ENCODE measurements at regions of chr1 and their contacts with region 1.

Region 1: DNA sequence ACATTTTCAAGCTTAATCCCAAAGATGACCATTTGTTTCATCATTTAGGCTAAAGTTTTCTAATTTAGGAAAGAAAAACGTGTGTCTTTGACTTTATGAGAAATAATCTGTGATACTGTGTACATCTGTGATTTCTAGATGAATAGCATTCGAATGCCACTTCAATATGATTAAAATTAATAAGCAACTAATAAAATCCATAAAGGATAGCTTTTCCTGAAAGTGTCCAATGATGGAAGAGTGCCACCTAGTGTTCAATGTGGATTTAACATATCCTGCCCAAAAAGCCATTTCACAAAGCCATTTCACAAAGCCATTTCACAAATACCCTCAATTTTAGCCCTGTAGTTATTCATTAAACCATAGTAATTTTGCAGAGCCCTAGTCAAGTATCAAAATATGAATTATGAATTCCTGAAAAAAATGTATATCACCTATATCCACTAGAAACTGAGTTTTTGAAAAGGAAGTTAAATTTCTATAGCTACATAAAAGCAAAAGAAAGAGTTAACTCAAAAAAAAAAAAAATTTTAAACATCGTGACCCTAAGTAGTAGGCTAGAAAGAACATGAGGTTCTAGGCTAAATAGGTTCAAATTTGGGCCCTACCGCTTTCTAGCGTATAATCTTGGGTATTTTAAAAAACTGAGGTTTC is 19.1 kb downstream of the NME7 start:
- DNase-seq: peak in 8 of 35 experiments; percentile 5 to 81 (median 14)
- ATAC-seq: peak in 1 of 4 experiments; percentile 36
- H3K4me3 ChIP-seq: no peak overlapping the region
- H3K4me3 Mint-ChIP-seq: no peak overlapping the region
- H3K27ac ChIP-seq: no peak overlapping the region
- H3K27ac Mint-ChIP-seq: no peak overlapping the region
- H3K4me1 ChIP-seq: no peaks in the 10 kb centered on the region
- H3K4me1 Mint-ChIP-seq: peaks cover 0 to 11% (median 9%) of the 10 kb centered on the region in 3 donors
- H3K27me3 ChIP-seq: no peaks in the 10 kb centered on the region
- H3K27me3 Mint-ChIP-seq: no peaks in the 10 kb centered on the region

Region 2: GRCh38 chr1:168234846-168235547 is 1113.5 kb before region 1 on chr1:
- CTCF ChIA-PET with region 1: interaction called, 4 to 21 read pairs
- POLR2A ChIA-PET with region 1: no interaction called
- DNase-seq: peak in 27 of 35 experiments; percentile 3 to 65 (median 23)
- ATAC-seq: peak; percentile 85 to 93 (median 86)
- H3K4me3 ChIP-seq: no peak overlapping the region
- H3K4me3 Mint-ChIP-seq: no peak overlapping the region
- H3K27ac ChIP-seq: no peak overlapping the region
- H3K27ac Mint-ChIP-seq: no peak overlapping the region
- H3K4me1 ChIP-seq: peaks cover 0 to 8% of the 10 kb centered on the region in 2 experiments
- H3K4me1 Mint-ChIP-seq: peaks cover 61 to 65% (median 62%) of the 10 kb centered on the region in 3 donors
- H3K27me3 ChIP-seq: no peaks in the 10 kb centered on the region
- H3K27me3 Mint-ChIP-seq: no peaks in the 10 kb centered on the region

Region 3: GRCh38 chr1:168439456-168440375 is 908.8 kb before region 1 on chr1:
- CTCF ChIA-PET with region 1: interaction called, 5 to 29 read pairs
- POLR2A ChIA-PET with region 1: interaction called in 1 of 2 experiments, 3 read pairs
- DNase-seq: peak; percentile 63 to 92 (median 78)
- ATAC-seq: peak; percentile 85 to 88 (median 86)
- H3K4me3 ChIP-seq: peak overlapping the region in 1 of 2 donors; percentile 12
- H3K4me3 Mint-ChIP-seq: peak overlapping the region; percentile 62 to 73 (median 71)
- H3K27ac ChIP-seq: peak overlapping the region; percentile 22
- H3K27ac Mint-ChIP-seq: peak overlapping the region; percentile 83 to 89
- H3K4me1 ChIP-seq: peaks cover 11 to 31% of the 10 kb centered on the region in 2 experiments
- H3K4me1 Mint-ChIP-seq: peaks cover 53 to 60% (median 59%) of the 10 kb centered on the region in 3 donors
- H3K27me3 ChIP-seq: no peaks in the 10 kb centered on the region
- H3K27me3 Mint-ChIP-seq: peaks cover 0 to 3% of the 10 kb centered on the region in 2 donors

Region 4: GRCh38 chr1:168453056-168453455 is 895.5 kb before region 1 on chr1:
- CTCF ChIA-PET with region 1: interaction called in 1 of 2 experiments, 12 read pairs
- POLR2A ChIA-PET with region 1: no interaction called
- DNase-seq: no peak
- ATAC-seq: no peak
- H3K4me3 ChIP-seq: no peak overlapping the region
- H3K4me3 Mint-ChIP-seq: no peak overlapping the region
- H3K27ac ChIP-seq: no peak overlapping the region
- H3K27ac Mint-ChIP-seq: no peak overlapping the region
- H3K4me1 ChIP-seq: no peaks in the 10 kb centered on the region
- H3K4me1 Mint-ChIP-seq: peaks cover 21 to 30% (median 23%) of the 10 kb centered on the region in 3 donors
- H3K27me3 ChIP-seq: no peaks in the 10 kb centered on the region
- H3K27me3 Mint-ChIP-seq: no peaks in the 10 kb centered on the region

Region 5: GRCh38 chr1:168603501-168604110 is 744.9 kb before region 1 on chr1:
- CTCF ChIA-PET with region 1: interaction called, 28 to 88 read pairs
- POLR2A ChIA-PET with region 1: no interaction called
- DNase-seq: peak; percentile 27 to 79 (median 62)
- ATAC-seq: peak; percentile 66 to 87 (median 77)
- H3K4me3 ChIP-seq: no peak overlapping the region
- H3K4me3 Mint-ChIP-seq: no peak overlapping the region
- H3K27ac ChIP-seq: no peak overlapping the region
- H3K27ac Mint-ChIP-seq: no peak overlapping the region
- H3K4me1 ChIP-seq: no peaks in the 10 kb centered on the region
- H3K4me1 Mint-ChIP-seq: no peaks in the 10 kb centered on the region
- H3K27me3 ChIP-seq: no peaks in the 10 kb centered on the region
- H3K27me3 Mint-ChIP-seq: peaks cover 1 to 4% of the 10 kb centered on the region in 2 donors

Region 6: DNA sequence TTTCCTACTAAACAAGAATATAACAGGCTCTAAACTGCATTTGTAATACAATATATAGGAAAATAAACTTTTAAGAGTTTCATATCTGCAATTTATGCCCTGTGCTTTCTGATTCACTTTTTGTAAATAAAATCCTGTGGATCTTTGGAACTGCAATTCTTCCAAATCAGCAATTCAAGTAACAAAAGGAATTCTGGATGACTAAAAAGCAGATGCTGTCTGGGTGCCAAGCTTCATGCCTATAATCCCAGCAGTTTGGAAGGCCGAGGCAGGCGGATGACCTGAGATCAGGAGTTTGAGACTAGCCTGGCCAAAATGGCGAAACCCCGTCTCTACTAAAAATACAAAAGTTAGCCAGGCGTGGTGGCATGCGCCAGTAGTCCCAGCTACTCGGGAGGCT is 12.8 kb after region 1 on chr1:
- CTCF ChIA-PET with region 1: interaction called, 3 to 22 read pairs
- POLR2A ChIA-PET with region 1: interaction called in 1 of 2 experiments, 6 read pairs
- DNase-seq: no peak
- ATAC-seq: no peak
- H3K4me3 ChIP-seq: no peak overlapping the region
- H3K4me3 Mint-ChIP-seq: no peak overlapping the region
- H3K27ac ChIP-seq: no peak overlapping the region
- H3K27ac Mint-ChIP-seq: no peak overlapping the region
- H3K4me1 ChIP-seq: no peaks in the 10 kb centered on the region
- H3K4me1 Mint-ChIP-seq: peaks cover 19 to 26% (median 23%) of the 10 kb centered on the region in 3 donors
- H3K27me3 ChIP-seq: no peaks in the 10 kb centered on the region
- H3K27me3 Mint-ChIP-seq: no peaks in the 10 kb centered on the region

Region 7: GRCh38 chr1:169367486-169368405 is 19.2 kb after region 1 on chr1 and contains the starts of genes BLZF1 and NME7:
- CTCF ChIA-PET with region 1: interaction called, 3 to 31 read pairs
- POLR2A ChIA-PET with region 1: interaction called in 1 of 2 experiments, 6 read pairs
- DNase-seq: peak; percentile 95 to 99 (median 99)
- ATAC-seq: peak; percentile 96 to 99 (median 98)
- H3K4me3 ChIP-seq: peak within 1 kb of the TSS; percentile 69 to 77
- H3K4me3 Mint-ChIP-seq: peak within 1 kb of the TSS in 1 of 3 donors; percentile 67
- H3K27ac ChIP-seq: peak within 1 kb of the TSS; percentile 84
- H3K27ac Mint-ChIP-seq: no peak within 1 kb of the TSS
- H3K4me1 ChIP-seq: peaks cover 4 to 31% of the 10 kb centered on the region in 2 experiments
- H3K4me1 Mint-ChIP-seq: peaks cover 21 to 41% (median 35%) of the 10 kb centered on the region in 3 donors
- H3K27me3 ChIP-seq: no peaks in the 10 kb centered on the region
- H3K27me3 Mint-ChIP-seq: no peaks in the 10 kb centered on the region
- total RNA-seq, gene BLZF1: 11.4 to 16.6 (median 15.6) TPM
- total RNA-seq, gene NME7: 7.4 to 14.4 (median 11.5) TPM

Measured in T-cell (primary cell).